K562 (cell line): ENCODE measurements at regions of chr13 and their contacts with region 1.

Region 1: DNA sequence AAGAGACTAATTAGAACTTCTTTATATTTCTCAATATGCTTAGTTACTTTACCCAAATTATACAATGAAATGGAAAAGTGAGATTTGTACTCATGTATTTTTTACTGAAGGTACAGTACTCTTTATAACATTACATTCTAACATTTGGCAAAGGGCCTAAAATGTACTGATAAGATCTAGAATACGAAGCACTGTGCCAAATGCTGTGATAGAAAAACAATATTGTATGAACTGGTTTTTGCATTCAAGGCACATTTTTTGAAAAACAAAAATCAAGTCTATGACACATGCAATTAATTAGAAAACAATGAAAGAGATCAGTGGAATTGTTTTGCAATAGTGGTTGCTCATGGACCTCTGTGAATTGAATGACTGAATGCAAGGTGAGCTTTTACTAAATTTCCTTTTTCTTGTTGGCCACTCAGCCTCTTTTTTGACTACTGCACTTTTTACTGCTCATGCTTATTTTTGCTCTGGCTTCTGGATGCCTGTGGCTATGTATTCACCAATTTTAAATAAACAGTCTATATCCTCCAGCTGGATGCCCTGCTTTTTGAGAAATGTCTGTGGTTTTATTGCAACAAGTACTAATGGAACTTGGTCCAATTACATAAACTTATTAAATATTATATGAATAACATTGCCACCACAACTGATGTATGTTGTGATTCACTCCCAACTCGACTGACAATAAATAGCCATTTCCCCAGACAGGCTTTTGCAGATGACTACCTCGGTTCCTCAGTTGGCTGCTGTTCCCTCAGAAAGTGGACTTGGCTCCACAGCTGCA is 41.4 kb upstream of the OBI1 start:
- DNase-seq: no peak
- ATAC-seq: no peak
- H3K4me3 ChIP-seq: no peak overlapping the region
- H3K27ac ChIP-seq: no peak overlapping the region
- H3K4me1 ChIP-seq: no peaks in the 10 kb centered on the region
- H3K27me3 ChIP-seq: no peaks in the 10 kb centered on the region
- CTCF ChIP-seq: no peak
- EP300 ChIP-seq: no peak
- POLR2A ChIP-seq: no peak
- RAD21 ChIP-seq: no peak

Region 2: GRCh38 chr13:78317030-78317429 is 383.3 kb before region 1 on chr13:
- CTCF ChIA-PET with region 1: no interaction called
- POLR2A ChIA-PET with region 1: no interaction called
- in situ Hi-C with region 1: no loop called
- intact Hi-C with region 1: loop called (anchors 10 kb)
- DNase-seq: no peak
- ATAC-seq: no peak
- H3K4me3 ChIP-seq: no peak overlapping the region
- H3K27ac ChIP-seq: no peak overlapping the region
- H3K4me1 ChIP-seq: no peaks in the 10 kb centered on the region
- H3K27me3 ChIP-seq: no peaks in the 10 kb centered on the region
- CTCF ChIP-seq: no peak
- EP300 ChIP-seq: no peak
- POLR2A ChIP-seq: no peak
- RAD21 ChIP-seq: peak in 1 of 2 experiments; percentile 14; a peak in 1 of 4 replicates

Region 3: GRCh38 chr13:78770601-78771000 is 70.3 kb after region 1 on chr13:
- CTCF ChIA-PET with region 1: no interaction called
- POLR2A ChIA-PET with region 1: no interaction called
- in situ Hi-C with region 1: no loop called
- intact Hi-C with region 1: no loop called
- DNase-seq: no peak
- ATAC-seq: no peak
- H3K4me3 ChIP-seq: no peak overlapping the region
- H3K27ac ChIP-seq: no peak overlapping the region
- H3K4me1 ChIP-seq: no peaks in the 10 kb centered on the region
- H3K27me3 ChIP-seq: no peaks in the 10 kb centered on the region
- CTCF ChIP-seq: no peak
- EP300 ChIP-seq: no peak
- POLR2A ChIP-seq: no peak
- RAD21 ChIP-seq: no peak